ENCODE measurements at regions of chr2 and their contacts with region 1.

Region 1: GRCh38 chr2:213151437-213152064 is at the start of gene IKZF2:
- DNase-seq: peak; percentile 45 to 61
- H3K4me3 ChIP-seq: peak within 1 kb of the TSS; percentile 83
- H3K27ac ChIP-seq: peak within 1 kb of the TSS; percentile 86
- H3K4me1 ChIP-seq: peaks cover 32% of the 10 kb centered on the region
- H3K27me3 ChIP-seq: no peaks in the 10 kb centered on the region
- CTCF ChIP-seq: no peak
- total RNA-seq, gene IKZF2: 22.2 and 28.3 TPM in 2 replicates

Region 2: DNA sequence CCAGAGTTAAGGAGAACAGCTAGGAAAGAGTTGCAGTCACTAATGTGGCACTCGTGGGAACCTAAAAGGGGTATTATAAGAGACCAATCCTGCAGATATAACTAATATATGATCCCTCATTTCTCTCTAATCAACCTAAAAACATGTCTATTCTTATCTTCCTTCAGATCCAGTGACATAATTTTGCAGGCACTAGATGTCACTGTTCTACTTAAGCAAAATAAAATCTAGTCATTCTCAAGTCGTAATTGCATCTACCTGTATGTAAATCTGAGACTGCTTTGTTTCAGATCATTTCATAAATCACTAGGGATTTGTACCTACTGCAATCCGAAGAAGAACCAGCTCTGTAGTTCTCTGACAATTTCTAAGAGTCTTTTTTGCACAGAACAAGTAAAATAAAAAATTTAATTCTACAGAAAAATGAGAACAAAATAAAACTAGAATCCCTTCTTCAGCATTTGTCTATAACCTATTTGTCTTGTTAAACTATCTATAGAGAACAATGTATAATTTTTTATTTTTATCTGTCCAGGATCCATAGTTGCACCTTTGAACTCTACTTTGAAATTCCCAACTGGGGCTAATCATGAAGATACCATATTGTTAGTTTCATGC is 556.4 kb before region 1 on chr2:
- CTCF ChIA-PET with region 1: no interaction called
- POLR2A ChIA-PET with region 1: no interaction called
- intact Hi-C with region 1: loop called (anchors 5 kb)
- DNase-seq: no peak
- H3K4me3 ChIP-seq: no peak overlapping the region
- H3K27ac ChIP-seq: no peak overlapping the region
- H3K4me1 ChIP-seq: no peaks in the 10 kb centered on the region
- H3K27me3 ChIP-seq: no peaks in the 10 kb centered on the region
- CTCF ChIP-seq: peak; percentile 56

Region 3: DNA sequence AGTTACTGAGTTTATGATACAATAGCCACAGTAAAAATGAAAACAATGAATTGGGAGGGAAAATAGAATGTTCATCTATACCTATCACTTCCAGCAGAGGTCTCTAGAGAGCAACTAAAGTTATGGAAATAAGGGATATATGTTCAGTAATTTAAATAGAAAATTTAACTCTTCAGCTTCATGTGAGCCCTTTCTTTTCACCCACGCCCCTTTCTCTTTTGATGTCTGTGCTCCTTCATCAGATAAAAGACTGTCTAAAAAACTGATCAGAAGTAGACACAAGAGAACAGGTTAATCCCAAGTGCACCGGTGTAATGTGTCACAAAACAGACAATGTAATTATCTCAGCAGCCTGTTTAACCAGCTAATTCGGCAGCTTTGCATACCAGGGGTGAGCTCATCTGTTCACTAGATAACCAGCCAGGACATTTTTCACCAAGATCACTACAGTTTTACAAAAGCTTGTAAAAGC is 374.5 kb before region 1 on chr2:
- CTCF ChIA-PET with region 1: interaction called, 5 read pairs
- POLR2A ChIA-PET with region 1: no interaction called
- intact Hi-C with region 1: loop called (anchors 1 kb)
- DNase-seq: peak; percentile 15 to 52
- H3K4me3 ChIP-seq: no peak overlapping the region
- H3K27ac ChIP-seq: no peak overlapping the region
- H3K4me1 ChIP-seq: no peaks in the 10 kb centered on the region; the same call in 1 of the 2 replicates
- H3K27me3 ChIP-seq: no peaks in the 10 kb centered on the region
- CTCF ChIP-seq: peak; percentile 73

Region 4: DNA sequence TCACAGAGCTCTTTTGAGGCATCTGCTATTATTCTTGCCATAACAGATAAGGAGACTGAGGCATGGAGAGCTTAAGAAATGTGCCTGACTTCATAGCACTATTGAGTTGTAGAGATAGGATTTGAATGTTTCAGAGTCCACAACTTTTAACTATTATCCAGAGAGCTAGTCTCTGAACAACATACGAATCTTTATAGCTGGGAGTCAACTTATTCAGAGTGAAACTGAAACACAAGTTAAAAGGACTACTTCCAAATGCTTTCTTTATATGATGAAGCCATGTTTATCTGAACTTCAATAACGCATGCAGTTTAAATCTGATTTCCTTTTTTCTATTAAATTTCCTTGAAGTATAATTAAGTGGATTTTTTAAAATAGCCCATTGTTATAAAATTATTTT is 268.9 kb before region 1 on chr2:
- CTCF ChIA-PET with region 1: no interaction called
- POLR2A ChIA-PET with region 1: no interaction called
- intact Hi-C with region 1: no loop called
- DNase-seq: no peak
- H3K4me3 ChIP-seq: no peak overlapping the region
- H3K27ac ChIP-seq: no peak overlapping the region
- H3K4me1 ChIP-seq: no peaks in the 10 kb centered on the region
- H3K27me3 ChIP-seq: no peaks in the 10 kb centered on the region
- CTCF ChIP-seq: no peak

Region 5: GRCh38 chr2:212912445-212913103 is 239.0 kb before region 1 on chr2:
- CTCF ChIA-PET with region 1: no interaction called
- POLR2A ChIA-PET with region 1: no interaction called
- intact Hi-C with region 1: loop called (anchors 2 kb)
- DNase-seq: peak; percentile 69 to 94
- H3K4me3 ChIP-seq: peak overlapping the region; percentile 54; the same call in 1 of the 2 replicates
- H3K27ac ChIP-seq: peak overlapping the region; percentile 100
- H3K4me1 ChIP-seq: peaks cover 76% of the 10 kb centered on the region
- H3K27me3 ChIP-seq: no peaks in the 10 kb centered on the region
- CTCF ChIP-seq: no peak

Region 6: DNA sequence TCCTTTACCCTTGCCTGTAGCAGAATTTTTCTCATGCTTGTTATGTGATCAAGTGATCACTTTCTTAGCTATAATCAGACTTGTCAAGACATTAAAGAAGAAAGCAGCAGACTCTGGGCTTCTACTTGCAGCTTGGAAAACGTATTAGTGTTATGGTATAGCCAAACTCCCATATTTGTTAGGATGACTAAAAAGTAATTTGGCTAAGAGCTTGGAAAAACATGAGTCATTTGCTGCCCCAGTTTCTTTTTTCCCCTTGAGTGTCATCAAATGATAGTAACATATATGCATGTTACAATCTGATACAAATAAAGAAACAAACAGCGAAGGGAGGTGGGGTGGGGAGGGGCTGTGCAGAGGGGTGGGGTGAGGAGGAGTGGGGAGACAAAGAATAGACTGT is 155.6 kb before region 1 on chr2:
- CTCF ChIA-PET with region 1: no interaction called
- POLR2A ChIA-PET with region 1: no interaction called
- intact Hi-C with region 1: no loop called
- DNase-seq: no peak
- H3K4me3 ChIP-seq: no peak overlapping the region
- H3K27ac ChIP-seq: no peak overlapping the region
- H3K4me1 ChIP-seq: no peaks in the 10 kb centered on the region
- H3K27me3 ChIP-seq: no peaks in the 10 kb centered on the region
- CTCF ChIP-seq: no peak

Region 7: GRCh38 chr2:213021971-213022899 is 129.3 kb before region 1 on chr2:
- CTCF ChIA-PET with region 1: interaction called, 7 read pairs
- POLR2A ChIA-PET with region 1: interaction called, 10 read pairs
- intact Hi-C with region 1: loop called (anchors 5 kb)
- DNase-seq: peak in 1 of 2 experiments; percentile 29
- H3K4me3 ChIP-seq: no peak overlapping the region
- H3K27ac ChIP-seq: no peak overlapping the region
- H3K4me1 ChIP-seq: no peaks in the 10 kb centered on the region
- H3K27me3 ChIP-seq: no peaks in the 10 kb centered on the region
- CTCF ChIP-seq: no peak

Region 8: GRCh38 chr2:213187833-213188532 is 36.4 kb after region 1 on chr2:
- CTCF ChIA-PET with region 1: no interaction called
- POLR2A ChIA-PET with region 1: no interaction called
- intact Hi-C with region 1: loop called (anchors 1 kb)
- DNase-seq: peak; percentile 58 to 60
- H3K4me3 ChIP-seq: no peak overlapping the region
- H3K27ac ChIP-seq: no peak overlapping the region
- H3K4me1 ChIP-seq: 0 out of 2 replicates have a peak, but pooled peaks cover 7% of the 10 kb centered on the region
- H3K27me3 ChIP-seq: no peaks in the 10 kb centered on the region
- CTCF ChIP-seq: no peak

Region 9: GRCh38 chr2:214809751-214810564 is 1658.4 kb after region 1 on chr2:
- CTCF ChIA-PET with region 1: no interaction called
- POLR2A ChIA-PET with region 1: no interaction called
- intact Hi-C with region 1: loop called (anchors 5 kb)
- DNase-seq: peak; percentile 94 to 100
- H3K4me3 ChIP-seq: peak overlapping the region; percentile 75
- H3K27ac ChIP-seq: peak overlapping the region; percentile 83
- H3K4me1 ChIP-seq: peaks cover 35% of the 10 kb centered on the region
- H3K27me3 ChIP-seq: no peaks in the 10 kb centered on the region
- CTCF ChIP-seq: no peak

Measured in PC-9 (cell line).